PC-9 (cell line): ENCODE measurements at regions of chr5 and their contacts with region 1.

Region 1: DNA sequence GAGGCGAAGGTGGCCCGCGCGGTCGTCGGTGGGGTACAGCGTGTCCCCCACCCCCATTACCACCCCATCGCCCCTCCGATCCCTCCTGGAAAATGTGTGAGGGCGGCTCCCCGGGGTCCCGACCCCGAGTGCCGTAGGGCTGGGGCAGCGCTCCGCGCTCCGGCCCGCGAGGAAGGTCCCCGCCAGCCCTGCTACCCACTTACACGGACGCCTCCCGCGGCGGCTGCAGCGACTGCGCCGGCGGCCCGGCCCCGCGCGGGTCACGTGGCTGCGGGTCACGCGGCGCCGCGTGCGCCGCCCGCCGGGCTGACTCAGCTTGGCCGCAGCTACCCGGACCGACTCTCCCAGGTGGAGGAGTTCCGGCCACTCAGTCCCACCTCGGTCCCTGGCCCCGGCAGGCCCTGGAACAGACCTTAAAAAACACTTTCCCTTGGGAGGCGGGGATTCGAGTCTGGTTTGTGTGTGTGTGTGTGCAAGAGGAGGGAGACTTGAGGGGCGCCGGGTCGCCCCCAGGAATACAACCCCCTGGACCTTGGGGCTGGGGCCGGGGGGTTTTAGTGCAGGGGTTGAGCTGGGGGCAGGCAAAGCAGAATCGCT is at the start of gene GNPDA1:
- DNase-seq: peak; percentile 66 to 81
- H3K4me3 ChIP-seq: peak within 1 kb of the TSS; percentile 61
- H3K27ac ChIP-seq: peak within 1 kb of the TSS; percentile 82
- H3K4me1 ChIP-seq: peaks cover 34% of the 10 kb centered on the region
- H3K27me3 ChIP-seq: no peaks in the 10 kb centered on the region
- CTCF ChIP-seq: no peak
- total RNA-seq, gene GNPDA1: 46.5 and 54.1 TPM in 2 replicates

Region 2: DNA sequence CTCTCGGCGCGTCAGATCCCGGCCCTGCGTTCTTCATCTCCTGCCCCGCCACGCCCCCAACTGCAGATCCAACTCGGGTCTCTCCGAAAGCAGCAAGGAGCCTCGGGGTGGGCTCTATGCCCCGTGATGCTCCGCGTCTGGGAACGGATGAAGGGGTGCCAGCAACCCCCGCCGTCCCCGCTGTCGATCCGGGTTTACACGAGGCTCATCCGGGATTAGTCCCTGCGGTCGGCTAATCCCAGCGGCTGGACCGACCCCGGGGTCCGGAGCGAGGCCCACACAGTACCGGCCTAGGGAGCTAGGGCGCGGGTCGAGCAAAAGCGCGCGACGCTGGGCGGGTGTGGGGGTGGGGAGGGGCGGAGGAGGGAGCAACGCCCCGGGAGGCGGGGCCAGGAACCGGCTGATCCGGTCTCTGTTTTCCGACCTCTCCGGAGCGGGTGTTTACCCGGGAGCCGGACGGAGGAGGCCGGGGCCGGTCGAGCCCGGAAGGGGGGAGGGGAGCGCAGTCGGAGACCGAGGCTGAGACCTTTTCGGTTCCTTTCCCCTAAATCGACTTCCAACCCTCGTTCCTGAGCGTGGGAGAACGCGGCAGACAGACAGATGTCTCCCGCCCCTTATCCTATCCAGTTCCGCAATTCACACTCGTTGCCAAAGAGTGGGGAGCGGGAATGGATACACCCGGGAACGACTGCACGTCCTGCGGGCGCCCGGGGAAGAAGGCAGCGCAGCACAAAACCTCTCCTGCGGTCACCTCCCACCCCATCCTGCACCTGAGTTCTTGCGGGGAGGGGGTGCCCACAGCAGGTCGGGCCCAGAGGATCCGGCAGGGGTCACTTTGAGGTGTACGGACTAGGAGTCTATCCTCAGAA is 163.3 kb before region 1 on chr5:
- CTCF ChIA-PET with region 1: no interaction called
- POLR2A ChIA-PET with region 1: no interaction called
- intact Hi-C with region 1: no loop called
- DNase-seq: peak; percentile 72 to 89
- H3K4me3 ChIP-seq: peak overlapping the region; percentile 98
- H3K27ac ChIP-seq: peak overlapping the region; percentile 99
- H3K4me1 ChIP-seq: peaks cover 41% of the 10 kb centered on the region
- H3K27me3 ChIP-seq: no peaks in the 10 kb centered on the region
- CTCF ChIP-seq: no peak

Region 3: GRCh38 chr5:142059294-142059940 is 46.5 kb after region 1 on chr5:
- CTCF ChIA-PET with region 1: no interaction called
- POLR2A ChIA-PET with region 1: interaction called, 5 read pairs
- intact Hi-C with region 1: loop called (anchors 2 kb)
- DNase-seq: no peak
- H3K4me3 ChIP-seq: no peak overlapping the region
- H3K27ac ChIP-seq: peak overlapping the region; percentile 88
- H3K4me1 ChIP-seq: peaks cover 35% of the 10 kb centered on the region
- H3K27me3 ChIP-seq: no peaks in the 10 kb centered on the region
- CTCF ChIP-seq: no peak

Region 4: DNA sequence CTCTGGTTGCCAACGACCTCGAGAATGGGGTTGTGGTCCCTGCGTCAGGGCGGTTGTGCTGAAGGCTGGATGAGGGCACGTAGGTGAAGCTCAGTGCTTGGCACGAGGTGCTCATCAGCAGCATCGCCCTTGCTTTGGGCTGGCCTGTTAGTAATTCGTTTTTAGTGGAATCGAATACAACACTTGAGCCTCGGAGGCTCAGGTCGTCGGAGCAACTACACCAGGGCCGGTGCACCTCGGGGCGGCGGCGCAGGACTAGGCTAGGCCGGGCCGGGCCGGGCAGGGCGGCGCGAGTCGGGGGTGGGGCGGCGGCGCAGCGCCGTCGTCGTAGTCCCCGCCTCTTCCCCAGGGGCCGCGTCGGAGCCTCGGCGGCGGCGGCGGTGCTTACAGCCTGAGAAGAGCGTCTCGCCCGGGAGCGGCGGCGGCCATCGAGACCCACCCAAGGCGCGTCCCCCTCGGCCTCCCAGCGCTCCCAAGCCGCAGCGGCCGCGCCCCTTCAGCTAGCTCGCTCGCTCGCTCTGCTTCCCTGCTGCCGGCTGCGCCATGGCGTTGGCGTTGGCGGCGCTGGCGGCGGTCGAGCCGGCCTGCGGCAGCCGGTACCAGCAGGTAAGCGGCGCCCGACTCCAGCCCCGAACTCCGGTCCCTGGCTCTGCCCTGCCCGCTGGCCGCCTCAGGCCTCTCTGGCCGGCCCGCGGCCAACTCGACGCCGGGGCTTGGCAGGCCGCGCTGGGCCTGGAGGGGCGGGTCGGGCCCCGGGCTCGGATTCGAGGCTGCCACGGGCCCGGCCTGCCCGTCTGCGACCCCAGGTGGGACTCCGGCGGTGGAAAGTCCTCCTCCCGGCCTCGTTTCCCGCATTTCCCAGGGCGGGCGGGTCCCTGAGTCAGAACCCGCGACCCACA is 95.8 kb after region 1 on chr5 and contains the start of gene NDFIP1:
- CTCF ChIA-PET with region 1: interaction called, 3 read pairs
- POLR2A ChIA-PET with region 1: interaction called, 4 read pairs
- intact Hi-C with region 1: loop called (anchors 1 kb)
- DNase-seq: peak; percentile 52 to 83
- H3K4me3 ChIP-seq: peak within 1 kb of the TSS; percentile 84
- H3K27ac ChIP-seq: peak within 1 kb of the TSS; percentile 58
- H3K4me1 ChIP-seq: peaks cover 15% of the 10 kb centered on the region
- H3K27me3 ChIP-seq: no peaks in the 10 kb centered on the region
- CTCF ChIP-seq: no peak
- total RNA-seq, gene NDFIP1: 40.7 and 40.9 TPM in 2 replicates

Region 5: DNA sequence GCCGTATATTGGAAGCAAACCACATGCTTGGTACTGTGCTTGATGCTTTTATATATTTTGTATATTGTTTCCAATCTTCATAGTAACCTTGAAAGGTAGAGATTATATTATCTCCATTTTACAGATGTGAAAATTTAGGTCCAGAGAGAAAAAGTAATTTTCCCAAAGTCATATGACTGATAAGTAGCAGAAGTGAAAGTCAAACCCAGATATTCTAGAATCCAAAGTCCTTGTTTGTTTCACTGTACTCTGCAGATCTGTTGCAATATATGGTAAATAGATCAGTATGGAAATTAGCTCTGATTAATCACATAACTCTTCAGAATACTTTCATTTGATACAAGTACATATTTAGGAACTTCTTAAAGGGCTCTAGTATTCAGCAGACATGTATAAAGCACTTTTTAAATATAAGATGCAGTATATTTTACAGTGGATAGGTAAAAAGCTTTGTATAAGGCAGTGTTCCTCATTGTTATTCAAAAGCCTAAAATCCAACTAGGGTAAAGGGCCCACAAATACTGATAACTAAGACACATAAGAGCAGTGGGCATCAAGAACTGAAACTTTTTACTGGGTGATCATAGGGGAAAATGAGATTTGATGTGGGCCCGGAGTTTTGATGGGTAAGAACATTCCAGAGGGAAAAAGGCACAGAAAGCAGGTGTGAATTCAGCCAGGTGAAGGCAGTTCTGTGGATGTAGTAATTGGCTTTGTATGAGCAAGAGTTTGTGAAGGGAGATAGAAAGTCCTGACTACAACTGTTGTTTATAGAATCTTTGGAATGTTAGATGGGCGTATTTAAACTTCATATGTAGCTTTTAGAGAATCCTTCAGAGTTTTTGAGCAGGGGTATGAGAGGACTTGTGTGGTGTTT is 120.7 kb after region 1 on chr5:
- CTCF ChIA-PET with region 1: interaction called, 3 read pairs
- POLR2A ChIA-PET with region 1: no interaction called
- intact Hi-C with region 1: loop called (anchors 5 kb)
- DNase-seq: no peak
- H3K4me3 ChIP-seq: no peak overlapping the region
- H3K27ac ChIP-seq: no peak overlapping the region
- H3K4me1 ChIP-seq: no peaks in the 10 kb centered on the region
- H3K27me3 ChIP-seq: no peaks in the 10 kb centered on the region
- CTCF ChIP-seq: no peak

Region 6: GRCh38 chr5:142597546-142598341 is 584.9 kb after region 1 on chr5:
- CTCF ChIA-PET with region 1: interaction called, 15 read pairs
- POLR2A ChIA-PET with region 1: no interaction called
- intact Hi-C with region 1: no loop called
- DNase-seq: peak; percentile 55 to 79
- H3K4me3 ChIP-seq: peak overlapping the region; percentile 11; the same call in 1 of the 2 replicates
- H3K27ac ChIP-seq: peak overlapping the region; percentile 75
- H3K4me1 ChIP-seq: peaks cover 32% of the 10 kb centered on the region
- H3K27me3 ChIP-seq: no peaks in the 10 kb centered on the region
- CTCF ChIP-seq: no peak; the same call in 1 of the 2 replicates